CD4-positive, alpha-beta memory T cell (primary cell): ENCODE measurements at regions of chr4 and their contacts with region 1.

Region 1: GRCh38 chr4:77203380-77204197 is 46.6 kb downstream of the CCNG2 start:
- DNase-seq: peak; percentile 45 to 68 (median 63)
- H3K4me3 ChIP-seq: no peak overlapping the region
- H3K4me3 Mint-ChIP-seq: no peak overlapping the region
- H3K27ac ChIP-seq: no peak overlapping the region
- H3K27ac Mint-ChIP-seq: no peak overlapping the region
- H3K4me1 ChIP-seq: no peaks in the 10 kb centered on the region
- H3K4me1 Mint-ChIP-seq: no peaks in the 10 kb centered on the region
- H3K27me3 ChIP-seq: no peaks in the 10 kb centered on the region
- H3K27me3 Mint-ChIP-seq: no peaks in the 10 kb centered on the region

Region 2: DNA sequence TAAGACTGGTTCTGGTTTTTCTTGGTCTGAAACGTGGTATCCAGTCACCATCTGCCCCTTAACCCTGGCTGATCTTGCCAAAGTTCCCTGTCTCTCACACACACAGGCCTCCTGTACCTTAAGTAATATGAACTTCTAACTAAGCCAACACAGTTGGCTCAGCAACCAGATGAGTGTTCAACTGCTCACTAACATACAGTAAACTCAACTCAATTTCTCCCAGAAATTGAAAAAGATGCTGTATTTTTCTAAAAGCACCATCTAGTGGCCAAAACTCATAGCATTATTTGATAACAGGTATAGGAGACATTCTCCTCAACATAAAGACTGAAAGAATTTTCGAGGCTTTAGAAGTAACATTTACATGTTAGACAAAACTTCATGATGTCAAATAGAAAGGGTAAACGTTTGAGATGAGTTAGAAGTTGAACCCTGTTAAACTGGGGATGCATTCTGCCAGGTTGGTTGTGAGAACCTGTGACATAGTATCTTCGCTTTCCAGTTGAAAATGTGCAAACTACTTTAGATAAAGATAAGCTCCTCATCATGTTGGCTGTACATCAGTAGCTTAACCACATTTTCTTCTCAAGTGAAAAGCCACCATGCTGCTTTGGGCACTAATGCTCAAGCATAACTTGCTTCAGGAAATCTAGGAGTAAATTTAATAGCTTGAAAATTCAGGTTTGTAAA is 159.0 kb before region 1 on chr4:
- CTCF ChIA-PET with region 1: interaction called, 148 read pairs
- POLR2A ChIA-PET with region 1: interaction called, 5 read pairs
- intact Hi-C with region 1: loop called (anchors 1 kb)
- DNase-seq: peak in 4 of 5 donors; percentile 28 to 38 (median 32)
- H3K4me3 ChIP-seq: no peak overlapping the region
- H3K4me3 Mint-ChIP-seq: no peak overlapping the region
- H3K27ac ChIP-seq: no peak overlapping the region
- H3K27ac Mint-ChIP-seq: peak overlapping the region in 6 of 7 donors; percentile 1 to 83 (median 50)
- H3K4me1 ChIP-seq: peaks cover 9% of the 10 kb centered on the region
- H3K4me1 Mint-ChIP-seq: peaks cover 5 to 10% (median 8%) of the 10 kb centered on the region in 4 donors
- H3K27me3 ChIP-seq: no peaks in the 10 kb centered on the region
- H3K27me3 Mint-ChIP-seq: no peaks in the 10 kb centered on the region

Region 3: DNA sequence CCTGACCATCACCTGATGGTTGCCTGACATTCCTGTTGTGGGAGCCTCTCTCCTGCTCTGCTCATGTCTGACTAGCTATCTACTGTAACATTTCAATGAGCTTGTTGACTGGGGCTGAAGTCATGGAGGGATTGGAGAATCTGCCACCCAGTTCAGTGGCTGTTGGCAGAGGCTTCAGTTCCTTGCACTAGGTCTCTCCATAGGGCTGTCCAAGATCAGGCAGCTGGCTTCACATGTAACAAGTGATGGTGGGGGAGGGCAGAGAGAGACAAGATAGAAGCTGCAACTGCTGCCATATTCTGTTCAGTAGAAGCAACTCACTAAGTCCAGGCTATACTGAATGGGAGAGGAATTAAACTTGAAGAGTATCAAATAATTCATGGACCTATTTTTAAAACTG is 113.7 kb before region 1 on chr4:
- CTCF ChIA-PET with region 1: interaction called, 440 read pairs
- POLR2A ChIA-PET with region 1: interaction called, 9 read pairs
- intact Hi-C with region 1: loop called (anchors 1 kb)
- DNase-seq: no peak
- H3K4me3 ChIP-seq: no peak overlapping the region
- H3K4me3 Mint-ChIP-seq: no peak overlapping the region
- H3K27ac ChIP-seq: no peak overlapping the region
- H3K27ac Mint-ChIP-seq: no peak overlapping the region
- H3K4me1 ChIP-seq: peaks cover 6% of the 10 kb centered on the region
- H3K4me1 Mint-ChIP-seq: peaks cover 0 to 7% (median 4%) of the 10 kb centered on the region in 4 donors
- H3K27me3 ChIP-seq: no peaks in the 10 kb centered on the region
- H3K27me3 Mint-ChIP-seq: no peaks in the 10 kb centered on the region

Region 4: GRCh38 chr4:77120886-77121508 is 82.6 kb before region 1 on chr4:
- CTCF ChIA-PET with region 1: interaction called, 11 read pairs
- POLR2A ChIA-PET with region 1: no interaction called
- intact Hi-C with region 1: no loop called
- DNase-seq: no peak
- H3K4me3 ChIP-seq: no peak overlapping the region
- H3K4me3 Mint-ChIP-seq: no peak overlapping the region
- H3K27ac ChIP-seq: no peak overlapping the region
- H3K27ac Mint-ChIP-seq: no peak overlapping the region
- H3K4me1 ChIP-seq: no peaks in the 10 kb centered on the region
- H3K4me1 Mint-ChIP-seq: no peaks in the 10 kb centered on the region
- H3K27me3 ChIP-seq: no peaks in the 10 kb centered on the region
- H3K27me3 Mint-ChIP-seq: peaks cover 0 to 7% of the 10 kb centered on the region in 2 donors

Region 5: GRCh38 chr4:77178560-77178959 is 25.0 kb before region 1 on chr4:
- CTCF ChIA-PET with region 1: interaction called, 25 read pairs
- POLR2A ChIA-PET with region 1: no interaction called
- intact Hi-C with region 1: no loop called
- DNase-seq: no peak
- H3K4me3 ChIP-seq: no peak overlapping the region
- H3K4me3 Mint-ChIP-seq: no peak overlapping the region
- H3K27ac ChIP-seq: no peak overlapping the region
- H3K27ac Mint-ChIP-seq: peak overlapping the region in 1 of 7 donors; percentile 40
- H3K4me1 ChIP-seq: no peaks in the 10 kb centered on the region
- H3K4me1 Mint-ChIP-seq: no peaks in the 10 kb centered on the region
- H3K27me3 ChIP-seq: no peaks in the 10 kb centered on the region
- H3K27me3 Mint-ChIP-seq: peaks cover 7 to 11% of the 10 kb centered on the region in 2 donors

Region 6: GRCh38 chr4:77418333-77419038 is 214.9 kb after region 1 on chr4:
- CTCF ChIA-PET with region 1: no interaction called
- POLR2A ChIA-PET with region 1: no interaction called
- intact Hi-C with region 1: no loop called
- DNase-seq: no peak
- H3K4me3 ChIP-seq: no peak overlapping the region
- H3K4me3 Mint-ChIP-seq: no peak overlapping the region
- H3K27ac ChIP-seq: no peak overlapping the region
- H3K27ac Mint-ChIP-seq: no peak overlapping the region
- H3K4me1 ChIP-seq: no peaks in the 10 kb centered on the region
- H3K4me1 Mint-ChIP-seq: peaks cover 0 to 3% (median 0%) of the 10 kb centered on the region in 4 donors
- H3K27me3 ChIP-seq: no peaks in the 10 kb centered on the region
- H3K27me3 Mint-ChIP-seq: peaks cover 3 to 4% of the 10 kb centered on the region in 2 donors